Aorta (tissue), 5 donors: ENCODE measurements at regions of chr3 and their contacts with region 1.

Region 1: DNA sequence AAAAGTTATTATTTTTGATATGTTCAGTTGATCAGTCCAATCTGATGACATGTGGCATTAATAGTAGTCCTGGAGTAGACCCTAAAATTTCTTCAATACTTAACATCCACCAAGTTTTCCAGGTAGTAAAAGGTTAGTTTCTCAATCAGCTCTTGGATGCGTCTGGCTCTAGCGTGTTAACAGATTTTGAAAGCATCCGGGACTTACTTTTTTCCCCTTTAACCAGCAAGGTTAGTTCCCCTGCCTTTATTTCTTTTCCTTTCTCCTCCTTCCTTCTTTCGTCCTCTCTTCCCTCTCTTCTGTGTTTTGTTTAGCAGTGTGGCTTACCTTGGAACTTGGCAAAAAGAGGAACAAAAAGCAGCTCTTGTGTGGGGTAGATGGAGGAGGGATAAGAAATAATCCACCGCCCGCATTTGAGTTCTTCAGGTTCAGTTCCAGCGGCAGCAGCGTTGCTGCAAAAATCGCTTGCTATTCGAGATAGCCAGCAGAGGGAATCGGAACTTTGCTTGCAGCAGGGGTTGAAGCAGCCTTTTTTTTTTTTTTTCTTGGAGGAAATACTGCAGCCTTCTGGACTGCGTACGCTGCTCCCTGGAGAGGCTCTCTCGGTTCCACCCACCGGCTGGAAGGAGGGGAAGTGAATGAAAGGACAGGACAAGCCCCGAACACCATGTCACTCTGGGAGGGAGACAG is at the start of gene RBMS3:
- DNase-seq: peak; percentile 93 to 95
- ATAC-seq: peak; percentile 96
- H3K4me3 ChIP-seq: peak within 1 kb of the TSS; percentile 98 to 100
- H3K27ac ChIP-seq: peak within 1 kb of the TSS; percentile 87 to 93
- H3K4me1 ChIP-seq: peaks cover 0 to 3% of the 10 kb centered on the region in 2 donors
- H3K27me3 ChIP-seq: no peaks in the 10 kb centered on the region
- total RNA-seq, gene RBMS3: 157 to 203 TPM

Region 2: DNA sequence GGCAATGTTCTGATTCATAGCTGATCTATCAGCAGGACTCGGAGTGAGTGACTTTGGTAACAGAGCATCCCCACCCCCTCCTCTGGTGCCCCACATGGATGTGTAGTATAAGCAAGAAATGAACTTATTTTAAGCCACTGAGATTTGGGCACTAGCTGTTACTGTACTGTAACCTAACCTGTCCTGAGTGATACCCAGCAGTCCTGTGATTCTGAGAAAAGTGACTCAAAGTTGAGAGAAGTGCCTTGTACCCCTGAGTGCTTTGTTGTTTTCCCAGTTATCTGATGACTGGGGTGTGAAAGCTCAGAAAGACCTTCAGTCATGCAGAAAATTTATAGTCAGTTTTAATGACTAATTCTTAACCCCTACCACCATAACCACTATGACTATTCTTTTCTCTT is 439.6 kb before region 1 on chr3:
- intact Hi-C with region 1: no loop called
- DNase-seq: no peak
- ATAC-seq: no peak
- H3K4me3 ChIP-seq: no peak overlapping the region
- H3K27ac ChIP-seq: no peak overlapping the region
- H3K4me1 ChIP-seq: no peaks in the 10 kb centered on the region
- H3K27me3 ChIP-seq: no peaks in the 10 kb centered on the region

Region 3: DNA sequence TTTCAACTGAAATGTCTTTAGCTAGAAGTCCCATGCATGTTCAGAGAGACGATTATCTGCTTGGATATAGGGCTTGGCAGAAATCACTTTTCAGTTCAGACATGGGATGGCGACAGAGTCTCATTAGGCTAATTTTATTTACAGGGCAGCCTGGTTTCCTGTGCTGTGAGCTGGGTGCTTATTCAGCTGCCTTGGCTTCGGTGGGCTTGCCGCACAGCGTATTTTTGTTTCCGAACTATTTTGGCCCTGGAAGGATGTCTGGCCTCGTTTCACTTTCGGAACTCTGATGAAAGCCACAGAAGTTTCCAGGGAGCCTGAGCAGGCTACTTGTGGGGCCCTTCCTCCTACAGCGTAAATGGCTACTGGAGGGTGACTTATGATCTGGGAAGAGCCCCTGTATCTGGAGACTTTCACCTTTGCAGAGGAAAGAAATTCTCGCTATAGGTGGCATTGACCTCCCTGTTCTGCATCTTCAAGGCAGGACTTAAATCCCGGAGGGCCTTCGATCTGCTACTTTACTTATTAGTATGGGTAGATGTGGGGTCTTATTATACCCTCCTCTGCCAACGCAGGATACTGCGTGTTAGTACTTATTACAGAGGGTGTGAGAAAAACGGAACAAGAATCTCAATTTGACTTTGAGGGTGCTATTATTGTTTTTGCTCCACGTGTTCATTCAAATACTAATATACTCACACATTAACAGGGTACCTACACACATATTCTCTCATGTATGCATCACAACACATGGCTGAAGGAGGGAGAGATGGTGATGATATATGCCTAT is 363.6 kb before region 1 on chr3:
- intact Hi-C with region 1: loop called (anchors 2 to 5 kb)
- DNase-seq: peak; percentile 80 to 81
- ATAC-seq: peak; percentile 90
- H3K4me3 ChIP-seq: no peak overlapping the region
- H3K27ac ChIP-seq: peak overlapping the region in 1 of 2 donors; percentile 23
- H3K4me1 ChIP-seq: no peaks in the 10 kb centered on the region
- H3K27me3 ChIP-seq: no peaks in the 10 kb centered on the region

Region 4: GRCh38 chr3:29202378-29202777 is 78.2 kb before region 1 on chr3:
- intact Hi-C with region 1: no loop called
- DNase-seq: no peak
- ATAC-seq: no peak
- H3K4me3 ChIP-seq: no peak overlapping the region
- H3K27ac ChIP-seq: no peak overlapping the region
- H3K4me1 ChIP-seq: no peaks in the 10 kb centered on the region
- H3K27me3 ChIP-seq: no peaks in the 10 kb centered on the region

Region 5: DNA sequence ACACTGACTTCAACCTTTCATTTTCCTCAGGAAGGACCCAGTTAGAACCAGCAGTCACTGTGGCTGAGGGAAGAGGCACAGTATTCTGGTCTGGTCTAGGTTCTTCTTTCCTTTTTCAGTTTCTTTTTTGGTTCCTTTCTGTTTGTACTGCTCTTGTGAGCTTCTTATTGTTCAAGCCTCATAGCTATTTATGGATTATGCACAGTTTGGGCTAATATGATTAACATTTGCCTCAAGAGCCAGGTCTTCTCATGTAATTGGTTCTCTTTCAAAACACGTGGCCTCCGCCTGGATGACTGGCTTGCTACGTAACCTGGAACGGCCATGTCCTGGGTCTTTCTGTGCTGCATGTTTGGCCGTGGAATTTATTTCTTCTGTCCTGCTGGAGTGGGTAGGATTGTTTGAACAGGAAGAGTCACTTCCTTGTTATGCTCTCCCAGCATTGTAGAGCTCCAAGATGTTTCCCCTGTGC is 43.7 kb after region 1 on chr3:
- intact Hi-C with region 1: loop called in 1 of 2 experiments (anchors 5 kb)
- DNase-seq: peak; percentile 80
- ATAC-seq: peak; percentile 83
- H3K4me3 ChIP-seq: peak overlapping the region; percentile 15 to 89
- H3K27ac ChIP-seq: peak overlapping the region; percentile 58 to 88
- H3K4me1 ChIP-seq: peaks cover 0 to 7% of the 10 kb centered on the region in 2 donors
- H3K27me3 ChIP-seq: no peaks in the 10 kb centered on the region

Region 6: DNA sequence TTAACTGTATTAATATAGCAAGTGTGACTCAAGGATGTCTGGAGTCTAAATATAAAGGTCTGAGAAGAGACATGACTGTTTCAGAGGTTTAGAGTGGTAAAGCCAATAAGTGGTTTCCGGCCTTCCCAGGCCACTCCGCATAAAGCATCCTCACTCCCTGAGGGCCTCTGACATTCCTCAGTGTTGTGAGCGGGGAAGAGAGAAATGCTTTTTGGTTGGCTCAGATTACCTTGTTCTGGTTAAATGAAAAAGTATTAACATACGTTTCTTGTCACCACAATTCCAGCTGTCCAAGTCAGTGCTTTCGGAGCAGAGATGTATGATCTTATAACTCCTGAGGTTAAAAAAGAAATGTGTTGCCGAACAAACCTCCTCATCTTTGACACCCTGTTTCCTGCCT is 104.1 kb after region 1 on chr3:
- intact Hi-C with region 1: loop called in 1 of 2 experiments (anchors 10 kb)
- DNase-seq: peak; percentile 47 to 52
- ATAC-seq: peak; percentile 76
- H3K4me3 ChIP-seq: no peak overlapping the region
- H3K27ac ChIP-seq: peak overlapping the region; percentile 83 to 92
- H3K4me1 ChIP-seq: peaks cover 5 to 8% of the 10 kb centered on the region in 2 donors
- H3K27me3 ChIP-seq: no peaks in the 10 kb centered on the region

Region 7: DNA sequence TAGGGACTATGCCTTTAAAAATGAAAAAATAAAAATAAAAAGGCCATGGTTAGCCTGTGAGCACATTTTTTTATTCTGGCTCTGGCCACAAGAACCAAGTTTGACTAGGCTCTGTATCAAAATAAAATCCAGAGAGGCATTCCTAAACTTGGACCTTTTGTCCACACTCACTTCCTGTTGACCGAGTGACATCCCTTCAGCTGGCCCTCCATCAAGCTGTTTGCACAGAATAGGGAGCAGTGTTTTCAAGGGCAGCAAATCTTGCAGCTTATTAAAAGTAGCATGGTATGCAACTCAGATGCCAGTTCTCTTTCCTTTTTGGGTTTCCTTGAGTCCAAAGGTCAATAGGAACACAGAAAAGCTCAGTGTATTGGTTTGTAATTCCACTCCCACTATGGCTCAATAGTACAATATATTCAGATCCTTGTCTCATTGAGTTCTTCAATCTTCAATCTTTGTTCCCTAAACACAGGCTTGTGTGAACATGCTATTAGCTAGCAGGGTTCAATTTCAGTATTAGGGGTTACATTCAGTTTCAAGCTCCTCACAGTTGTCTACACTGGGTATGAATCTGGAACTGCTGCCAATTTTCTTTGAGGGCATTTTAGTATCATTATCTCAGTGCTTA is 244.8 kb after region 1 on chr3:
- intact Hi-C with region 1: loop called (anchors 2 to 5 kb)
- DNase-seq: peak in 1 of 2 donors; percentile 74
- ATAC-seq: peak; percentile 93
- H3K4me3 ChIP-seq: no peak overlapping the region
- H3K27ac ChIP-seq: peak overlapping the region; percentile 43 to 44
- H3K4me1 ChIP-seq: peaks cover 2 to 6% of the 10 kb centered on the region in 2 donors
- H3K27me3 ChIP-seq: no peaks in the 10 kb centered on the region

Region 8: GRCh38 chr3:29759411-29760225 is 479.1 kb after region 1 on chr3:
- intact Hi-C with region 1: loop called (anchors 2 to 5 kb)
- DNase-seq: no peak
- ATAC-seq: peak; percentile 33
- H3K4me3 ChIP-seq: peak overlapping the region in 1 of 2 donors; percentile 26
- H3K27ac ChIP-seq: peak overlapping the region; percentile 49 to 97
- H3K4me1 ChIP-seq: peaks cover 6 to 20% of the 10 kb centered on the region in 2 donors
- H3K27me3 ChIP-seq: no peaks in the 10 kb centered on the region